AG04449 (cell line): ENCODE measurements at regions of chr14 and their contacts with region 1.

Region 1: GRCh38 chr14:53399057-53399456 is 245.9 kb upstream of the DDHD1 start:
- DNase-seq: no peak
- H3K4me3 ChIP-seq: no peak overlapping the region
- CTCF ChIP-seq: peak; percentile 35

Region 2: DNA sequence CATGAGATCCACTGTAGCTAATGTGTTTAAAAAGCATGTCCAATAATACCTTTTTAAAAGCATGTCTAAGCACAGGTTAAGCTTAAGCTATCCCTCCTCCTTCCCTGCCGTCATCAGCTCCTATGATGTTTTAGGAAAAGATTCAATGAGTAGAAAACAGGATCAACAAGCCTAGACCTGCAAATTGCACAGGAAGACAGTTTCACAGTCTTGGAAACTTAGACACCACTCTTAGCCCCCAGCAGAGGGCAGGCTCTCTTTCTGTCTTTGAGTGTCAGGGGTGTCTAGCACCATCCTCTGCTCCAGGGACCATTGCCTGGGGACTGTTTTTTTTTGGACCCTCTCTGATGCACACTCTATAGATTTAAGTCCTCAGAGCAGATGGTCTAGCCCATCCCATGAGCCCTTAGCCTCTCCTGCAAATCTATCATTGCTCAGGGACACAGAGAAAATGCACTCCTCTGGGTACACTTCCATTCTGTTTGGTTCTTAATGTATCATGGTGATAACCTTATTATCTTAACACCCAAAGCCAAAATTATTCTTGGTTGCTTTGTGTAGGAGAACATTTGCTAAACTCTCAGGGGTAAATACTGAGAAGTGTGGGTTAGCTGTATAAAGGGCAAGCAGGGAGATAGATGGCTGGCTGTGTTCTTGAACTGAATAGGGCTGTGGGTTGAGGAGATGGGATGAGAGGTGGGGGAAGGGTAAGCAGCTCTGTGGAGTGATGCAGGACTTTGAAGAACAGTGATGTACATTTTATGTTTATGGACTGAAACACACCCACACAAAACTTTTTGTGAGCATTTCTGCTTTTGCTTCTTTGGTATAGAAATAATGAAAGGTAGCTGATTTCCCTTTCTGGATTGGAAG is 14.0 kb after region 1 on chr14:
- CTCF ChIA-PET with region 1: interaction called, 18 read pairs
- POLR2A ChIA-PET with region 1: no interaction called
- DNase-seq: no peak
- H3K4me3 ChIP-seq: no peak overlapping the region
- CTCF ChIP-seq: peak; percentile 49